ENCODE measurements at regions of chr5 and their contacts with region 1.

Region 1: DNA sequence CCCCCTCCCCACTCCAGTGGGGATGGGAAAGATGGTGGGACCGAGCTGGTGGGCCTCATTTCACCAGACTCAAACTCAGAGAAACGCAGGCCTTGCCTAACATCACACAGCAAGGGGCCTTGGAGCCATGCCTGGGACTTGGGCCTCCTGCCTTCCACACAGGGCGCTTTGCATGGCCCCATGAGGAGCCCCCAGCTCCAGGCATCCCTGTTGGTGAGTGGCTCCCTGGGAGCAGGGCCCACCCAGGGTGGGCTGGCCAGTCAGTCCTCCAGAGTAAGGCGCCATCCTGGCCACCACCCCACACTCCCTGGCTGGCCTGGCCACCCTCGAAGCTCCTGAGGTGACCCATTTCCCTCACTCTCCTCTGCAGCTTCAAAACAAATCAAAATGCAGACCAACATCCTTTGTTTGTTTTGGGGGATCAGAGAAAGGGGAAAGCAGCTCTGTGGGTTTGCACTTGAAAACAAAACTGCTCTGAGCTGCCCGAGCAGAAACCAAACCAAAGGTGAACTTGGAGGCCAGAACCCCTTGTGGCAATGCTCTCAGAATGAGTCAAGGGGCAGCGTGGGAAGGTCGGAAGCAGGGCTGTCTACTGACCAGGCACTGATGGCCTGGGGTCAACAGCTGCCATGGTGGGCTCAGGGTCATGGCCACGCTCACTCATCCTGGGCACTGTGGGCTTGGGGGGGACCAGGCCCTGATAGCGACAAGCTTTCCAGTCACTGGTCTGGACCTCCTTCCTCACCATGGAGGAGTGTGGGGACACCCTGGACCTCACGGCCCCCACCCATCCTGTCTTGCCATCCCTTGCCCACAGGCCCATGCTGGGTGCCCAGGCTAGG is 37.0 kb upstream of the VDAC1 start:
- DNase-seq: peak; percentile 32
- H3K4me3 Mint-ChIP-seq: no peak overlapping the region
- H3K27ac Mint-ChIP-seq: peak overlapping the region; percentile 81
- H3K4me1 Mint-ChIP-seq: peaks cover 56% of the 10 kb centered on the region
- H3K27me3 Mint-ChIP-seq: peaks cover 2% of the 10 kb centered on the region

Region 2: GRCh38 chr5:133996683-133997252 is 45.0 kb before region 1 on chr5:
- CTCF ChIA-PET with region 1: interaction called, 10 read pairs
- POLR2A ChIA-PET with region 1: no interaction called
- DNase-seq: no peak
- H3K4me3 Mint-ChIP-seq: no peak overlapping the region
- H3K27ac Mint-ChIP-seq: no peak overlapping the region
- H3K4me1 Mint-ChIP-seq: peaks cover 63% of the 10 kb centered on the region
- H3K27me3 Mint-ChIP-seq: no peaks in the 10 kb centered on the region

Region 3: GRCh38 chr5:134026521-134027268 is 15.1 kb before region 1 on chr5:
- CTCF ChIA-PET with region 1: interaction called, 24 read pairs
- POLR2A ChIA-PET with region 1: interaction called, 3 read pairs
- DNase-seq: peak; percentile 70
- H3K4me3 Mint-ChIP-seq: no peak overlapping the region
- H3K27ac Mint-ChIP-seq: no peak overlapping the region
- H3K4me1 Mint-ChIP-seq: no peaks in the 10 kb centered on the region
- H3K27me3 Mint-ChIP-seq: peaks cover 8% of the 10 kb centered on the region

Region 4: DNA sequence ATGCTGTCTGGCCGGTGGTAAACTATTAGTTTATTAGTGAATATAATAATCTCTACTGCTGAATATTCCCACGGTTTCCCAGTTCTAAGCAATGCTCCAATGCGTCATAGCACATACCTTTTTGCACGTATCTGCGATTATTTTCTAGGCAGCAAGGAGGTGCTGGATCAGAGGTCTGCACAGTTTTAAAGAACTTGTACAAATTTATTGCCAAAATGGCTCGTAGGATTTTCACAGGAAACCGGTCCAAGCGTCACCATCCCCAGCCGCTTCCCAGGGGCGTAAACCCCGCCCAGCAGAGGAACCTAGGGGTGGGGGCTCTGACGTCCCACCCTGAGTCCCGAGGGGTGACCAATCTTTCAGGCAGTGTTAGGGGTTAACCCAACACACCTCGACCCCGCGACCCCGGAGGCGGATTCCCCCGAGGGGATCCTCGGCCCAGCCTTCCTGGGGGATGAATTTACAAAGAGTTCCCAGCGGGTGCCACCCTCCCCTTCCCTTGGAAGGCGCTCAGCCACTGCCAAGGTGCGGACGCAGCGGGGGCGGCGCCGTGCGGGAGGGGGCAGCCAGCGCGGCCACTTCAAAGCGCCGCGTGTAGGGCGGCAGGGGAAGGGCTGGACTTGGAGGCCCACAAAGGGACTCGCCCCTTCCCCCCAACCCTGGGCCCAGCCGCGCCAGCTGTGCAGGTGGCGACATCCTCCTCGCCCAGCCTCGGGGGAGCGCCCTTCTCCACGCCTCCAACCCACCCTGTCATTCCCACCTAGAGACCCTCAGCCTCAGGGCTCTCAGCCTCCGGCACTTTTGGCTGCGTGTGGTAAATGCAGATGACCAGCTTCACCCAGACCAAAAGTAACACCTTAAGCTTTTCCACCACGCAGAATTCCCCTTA is 29.2 kb after region 1 on chr5:
- CTCF ChIA-PET with region 1: interaction called, 21 read pairs
- POLR2A ChIA-PET with region 1: interaction called, 3 read pairs
- DNase-seq: peak; percentile 35
- H3K4me3 Mint-ChIP-seq: peak overlapping the region; percentile 59
- H3K27ac Mint-ChIP-seq: peak overlapping the region; percentile 85
- H3K4me1 Mint-ChIP-seq: peaks cover 66% of the 10 kb centered on the region
- H3K27me3 Mint-ChIP-seq: peaks cover 4% of the 10 kb centered on the region

Region 5: GRCh38 chr5:134101686-134102439 is 60.1 kb after region 1 on chr5:
- CTCF ChIA-PET with region 1: interaction called, 44 read pairs
- POLR2A ChIA-PET with region 1: interaction called, 4 read pairs
- DNase-seq: peak; percentile 67
- H3K4me3 Mint-ChIP-seq: no peak overlapping the region
- H3K27ac Mint-ChIP-seq: peak overlapping the region; percentile 46
- H3K4me1 Mint-ChIP-seq: peaks cover 90% of the 10 kb centered on the region
- H3K27me3 Mint-ChIP-seq: peaks cover 1% of the 10 kb centered on the region

Region 6: DNA sequence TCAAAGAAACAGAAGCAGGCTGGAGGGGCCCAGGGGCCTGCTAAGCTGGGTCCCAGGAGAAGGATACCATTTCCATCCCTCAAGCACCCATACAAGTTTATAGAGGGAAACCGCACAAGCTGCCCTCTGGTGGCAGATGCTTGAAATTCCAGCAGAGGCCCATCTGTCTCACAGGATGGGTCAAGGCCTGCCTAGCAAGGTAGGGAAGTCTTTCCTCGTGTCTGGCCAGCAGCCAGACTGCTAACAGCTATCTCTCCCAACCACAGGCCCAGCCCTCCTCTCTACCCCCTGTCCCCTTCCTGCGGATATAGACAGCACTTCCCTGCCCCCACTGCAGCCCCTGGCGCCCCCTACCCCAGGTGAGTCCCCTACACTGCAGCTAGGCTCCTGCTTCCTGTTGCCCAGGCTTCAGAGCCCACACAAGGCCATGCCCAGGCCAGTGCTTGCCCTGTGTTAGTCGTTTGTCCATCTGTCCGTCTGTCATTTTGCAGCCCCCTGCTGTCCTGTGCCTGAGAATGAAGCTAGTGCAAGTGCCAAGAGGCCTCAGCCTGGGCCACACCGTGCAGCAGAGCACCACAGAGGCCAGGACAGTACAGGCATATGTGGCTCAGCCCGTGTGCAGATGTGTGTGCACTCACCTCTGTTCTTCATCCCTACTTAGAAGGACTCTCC is 98.9 kb after region 1 on chr5:
- CTCF ChIA-PET with region 1: interaction called, 258 read pairs
- POLR2A ChIA-PET with region 1: interaction called, 3 read pairs
- DNase-seq: peak; percentile 67
- H3K4me3 Mint-ChIP-seq: no peak overlapping the region
- H3K27ac Mint-ChIP-seq: peak overlapping the region; percentile 79
- H3K4me1 Mint-ChIP-seq: peaks cover 71% of the 10 kb centered on the region
- H3K27me3 Mint-ChIP-seq: no peaks in the 10 kb centered on the region